Common myeloid progenitor, CD34-positive (primary cell): ENCODE measurements at regions of chr12 and their contacts with region 1.

Region 1: GRCh38 chr12:51871126-51871525 is 16.8 kb upstream of the ANKRD33 start:
- DNase-seq: peak; percentile 74 to 89 (median 87)
- H3K4me3 ChIP-seq: peak overlapping the region in 1 of 7 experiments; percentile 8
- H3K27ac ChIP-seq: no peak overlapping the region
- H3K4me1 ChIP-seq: peaks cover 4 to 61% (median 53%) of the 10 kb centered on the region in 4 experiments
- H3K27me3 ChIP-seq: peaks cover 0 to 10% (median 0%) of the 10 kb centered on the region in 5 experiments

Region 2: GRCh38 chr12:51814311-51815088 is 56.6 kb before region 1 on chr12:
- CTCF ChIA-PET with region 1: interaction called, 46 read pairs
- POLR2A ChIA-PET with region 1: no interaction called
- DNase-seq: peak; percentile 70 to 78 (median 76)
- H3K4me3 ChIP-seq: peak overlapping the region; percentile 31 to 72 (median 56)
- H3K27ac ChIP-seq: no peak overlapping the region
- H3K4me1 ChIP-seq: peaks cover 0 to 11% (median 8%) of the 10 kb centered on the region in 4 experiments
- H3K27me3 ChIP-seq: peaks cover 0 to 13% (median 7%) of the 10 kb centered on the region in 5 experiments

Region 3: GRCh38 chr12:51823875-51824565 is 47.1 kb before region 1 on chr12:
- CTCF ChIA-PET with region 1: interaction called, 62 read pairs
- POLR2A ChIA-PET with region 1: interaction called, 4 read pairs
- DNase-seq: peak; percentile 61 to 70 (median 66)
- H3K4me3 ChIP-seq: no peak overlapping the region
- H3K27ac ChIP-seq: no peak overlapping the region
- H3K4me1 ChIP-seq: peaks cover 4 to 50% (median 49%) of the 10 kb centered on the region in 4 experiments
- H3K27me3 ChIP-seq: no peaks in the 10 kb centered on the region

Region 4: DNA sequence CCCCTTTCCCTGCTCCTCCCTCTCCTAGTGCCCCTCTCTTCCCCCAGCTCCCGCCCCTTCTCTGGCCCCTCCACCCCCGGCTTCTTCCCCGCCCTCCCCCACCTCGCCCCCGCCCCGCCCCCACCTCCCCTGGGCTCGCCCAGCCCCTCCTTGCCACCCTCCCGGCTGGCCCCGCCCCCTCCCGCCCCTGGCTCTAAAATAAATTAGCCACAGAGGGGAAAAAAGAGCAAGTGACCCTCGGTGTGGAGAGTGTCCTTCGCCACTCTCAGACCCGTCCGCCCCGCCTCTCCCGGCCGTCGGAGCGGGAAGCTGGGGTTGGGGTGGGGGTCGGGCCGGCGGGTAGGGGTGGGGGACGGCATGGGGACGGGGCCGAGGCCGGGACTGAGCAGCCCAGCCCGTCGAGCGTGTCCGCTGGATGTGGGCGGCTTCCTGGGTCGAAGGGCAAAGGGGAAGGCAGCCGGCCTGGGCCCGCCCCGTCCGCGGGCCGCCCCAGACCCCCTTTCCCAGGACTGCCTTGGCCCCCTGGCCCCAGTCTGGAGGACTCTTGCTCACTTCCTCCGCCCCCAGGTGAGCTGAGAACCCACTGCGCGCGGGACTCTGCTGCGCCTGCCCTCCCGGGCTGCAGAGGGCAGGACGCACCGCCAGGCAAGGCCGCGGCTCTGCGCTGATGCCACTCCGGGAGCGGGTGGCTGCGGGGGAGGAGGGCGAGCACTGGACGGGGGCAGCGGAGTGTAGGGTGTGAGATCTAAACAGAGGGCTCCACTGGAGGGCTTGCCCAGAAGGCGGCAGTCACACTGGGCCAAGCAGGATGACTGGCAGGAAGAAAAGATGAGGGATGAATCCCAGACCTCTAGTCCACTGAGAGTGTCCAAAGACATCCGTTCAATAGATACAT is 22.0 kb before region 1 on chr12:
- CTCF ChIA-PET with region 1: interaction called, 32 read pairs
- POLR2A ChIA-PET with region 1: no interaction called
- DNase-seq: no peak
- H3K4me3 ChIP-seq: no peak overlapping the region
- H3K27ac ChIP-seq: no peak overlapping the region
- H3K4me1 ChIP-seq: peaks cover 0 to 55% (median 42%) of the 10 kb centered on the region in 4 experiments
- H3K27me3 ChIP-seq: peaks cover 0 to 31% (median 9%) of the 10 kb centered on the region in 5 experiments

Region 5: DNA sequence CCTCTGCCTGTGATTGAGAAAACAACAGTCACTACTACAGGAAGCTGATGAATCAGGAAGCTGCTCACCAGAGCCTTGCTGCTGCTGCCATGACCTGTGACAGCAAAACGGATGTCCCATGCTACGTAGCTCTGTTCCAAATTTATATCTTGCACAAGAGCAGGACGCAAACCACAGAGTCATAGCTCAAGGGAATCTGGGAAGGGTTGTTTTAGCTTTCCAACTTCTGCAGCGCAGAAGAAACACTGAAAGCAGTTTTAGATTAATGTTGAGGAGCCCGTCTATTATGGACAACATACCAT is 14.8 kb after region 1 on chr12:
- CTCF ChIA-PET with region 1: interaction called, 25 read pairs
- POLR2A ChIA-PET with region 1: interaction called, 3 read pairs
- DNase-seq: peak; percentile 80 to 91 (median 89)
- H3K4me3 ChIP-seq: peak overlapping the region in 4 of 7 experiments; percentile 6 to 40 (median 23)
- H3K27ac ChIP-seq: peak overlapping the region in 1 of 2 experiments; percentile 43
- H3K4me1 ChIP-seq: peaks cover 8 to 20% (median 15%) of the 10 kb centered on the region in 4 experiments
- H3K27me3 ChIP-seq: no peaks in the 10 kb centered on the region

Region 6: GRCh38 chr12:51891843-51892242 is 20.7 kb after region 1 on chr12:
- CTCF ChIA-PET with region 1: interaction called, 25 read pairs
- POLR2A ChIA-PET with region 1: no interaction called
- DNase-seq: peak in 1 of 3 donors; percentile 15
- H3K4me3 ChIP-seq: no peak overlapping the region
- H3K27ac ChIP-seq: no peak overlapping the region
- H3K4me1 ChIP-seq: peaks cover 0 to 6% (median 3%) of the 10 kb centered on the region in 4 experiments
- H3K27me3 ChIP-seq: no peaks in the 10 kb centered on the region